ENCODE measurements at regions of chr5 and their contacts with region 1.

Region 1: DNA sequence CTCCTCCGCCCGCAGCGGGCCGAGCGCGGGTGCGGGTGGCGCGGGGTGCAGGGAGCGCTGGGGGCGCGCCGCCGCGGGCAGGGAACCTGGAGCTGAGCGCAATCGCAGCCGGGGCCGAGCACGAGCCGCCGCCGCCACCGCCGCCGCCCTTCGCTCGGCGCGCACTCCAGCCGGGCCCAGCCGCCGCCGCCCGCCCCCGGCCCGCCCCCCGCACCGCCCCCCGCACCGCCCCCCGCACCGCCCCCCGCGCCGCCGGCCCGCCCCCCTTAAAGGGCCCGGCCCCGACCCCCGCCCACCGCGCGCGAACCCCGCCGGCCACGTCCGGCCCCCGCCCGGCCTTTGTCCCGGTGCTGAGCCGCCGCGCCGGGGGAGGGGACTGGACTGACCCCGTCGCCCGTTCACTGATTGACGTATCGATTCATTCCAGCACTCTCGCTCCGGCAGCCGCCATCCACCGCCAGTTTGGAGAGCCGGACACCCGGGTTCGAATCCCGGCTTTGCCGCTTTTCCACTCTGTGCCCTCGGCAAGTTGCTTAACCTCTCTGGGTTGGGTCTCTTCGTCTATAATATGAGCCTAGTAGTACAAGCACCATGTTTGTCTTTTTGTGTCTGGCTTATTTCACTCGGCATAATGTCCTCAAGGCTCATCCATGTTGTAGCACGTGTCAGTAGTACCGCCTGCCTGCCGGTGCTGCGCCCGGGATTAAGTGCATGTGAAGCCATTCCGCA is at the start of gene SH3PXD2B:
- DNase-seq: no peak
- ATAC-seq: peak; percentile 54
- H3K4me3 ChIP-seq: peak within 1 kb of the TSS; percentile 55; the same call in 1 of the 2 replicates
- H3K27ac ChIP-seq: no peak within 1 kb of the TSS
- H3K4me1 ChIP-seq: no peaks in the 10 kb centered on the region
- H3K27me3 ChIP-seq: peaks cover 1 to 6% of the 10 kb centered on the region in 2 experiments; a peak in 2 of 4 replicates
- CTCF ChIP-seq: no peak
- EP300 ChIP-seq: no peak
- POLR2A ChIP-seq: no peak
- RAD21 ChIP-seq: no peak
- polyA plus RNA-seq, gene SH3PXD2B: 0.45 to 0.66 TPM

Region 2: GRCh38 chr5:172315587-172316493 is 138.7 kb before region 1 on chr5:
- CTCF ChIA-PET with region 1: no interaction called
- POLR2A ChIA-PET with region 1: no interaction called
- RAD21 ChIA-PET with region 1: no interaction called
- SMC1A ChIA-PET with region 1: no interaction called
- in situ Hi-C with region 1: no loop called
- intact Hi-C with region 1: loop called (anchors 5 kb)
- DNase-seq: no peak
- ATAC-seq: peak; percentile 85
- H3K4me3 ChIP-seq: no peak overlapping the region
- H3K27ac ChIP-seq: peak overlapping the region; percentile 84
- H3K4me1 ChIP-seq: peaks cover 52% of the 10 kb centered on the region
- H3K27me3 ChIP-seq: no peaks in the 10 kb centered on the region
- CTCF ChIP-seq: no peak
- EP300 ChIP-seq: no peak
- POLR2A ChIP-seq: no peak
- RAD21 ChIP-seq: peak; percentile 10; the same call in 1 of the 2 replicates

Region 3: DNA sequence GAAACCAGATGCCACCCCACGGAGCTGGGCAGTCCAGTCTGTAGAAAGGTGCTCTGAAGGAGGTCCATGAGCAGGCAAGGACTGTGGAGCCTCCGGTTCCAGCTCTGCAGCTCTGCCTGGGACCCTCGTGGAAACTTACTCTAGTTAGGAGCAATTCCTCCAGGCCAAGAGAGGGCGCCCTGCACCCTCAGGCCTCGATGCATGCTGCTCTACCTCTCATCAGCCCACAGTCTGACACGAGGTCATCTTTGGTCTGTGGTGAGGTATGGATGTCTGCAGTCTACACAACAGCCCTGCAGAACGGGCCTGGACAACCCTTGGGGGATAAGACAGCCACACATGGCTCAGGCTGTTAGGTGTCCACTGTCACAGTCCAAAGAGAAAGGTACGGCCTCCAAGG is 120.3 kb before region 1 on chr5:
- CTCF ChIA-PET with region 1: interaction called, 6 read pairs
- POLR2A ChIA-PET with region 1: no interaction called
- RAD21 ChIA-PET with region 1: no interaction called
- SMC1A ChIA-PET with region 1: interaction called, 3 read pairs
- in situ Hi-C with region 1: no loop called
- intact Hi-C with region 1: loop called (anchors 1 kb)
- DNase-seq: no peak
- ATAC-seq: peak; percentile 68
- H3K4me3 ChIP-seq: no peak overlapping the region
- H3K27ac ChIP-seq: no peak overlapping the region
- H3K4me1 ChIP-seq: no peaks in the 10 kb centered on the region
- H3K27me3 ChIP-seq: no peaks in the 10 kb centered on the region; a peak in 1 of 4 replicates
- CTCF ChIP-seq: peak; percentile 9 to 36 (median 20); a peak in 3 of 6 replicates
- EP300 ChIP-seq: no peak
- POLR2A ChIP-seq: no peak
- RAD21 ChIP-seq: peak; percentile 38; the same call in 1 of the 2 replicates

Region 4: DNA sequence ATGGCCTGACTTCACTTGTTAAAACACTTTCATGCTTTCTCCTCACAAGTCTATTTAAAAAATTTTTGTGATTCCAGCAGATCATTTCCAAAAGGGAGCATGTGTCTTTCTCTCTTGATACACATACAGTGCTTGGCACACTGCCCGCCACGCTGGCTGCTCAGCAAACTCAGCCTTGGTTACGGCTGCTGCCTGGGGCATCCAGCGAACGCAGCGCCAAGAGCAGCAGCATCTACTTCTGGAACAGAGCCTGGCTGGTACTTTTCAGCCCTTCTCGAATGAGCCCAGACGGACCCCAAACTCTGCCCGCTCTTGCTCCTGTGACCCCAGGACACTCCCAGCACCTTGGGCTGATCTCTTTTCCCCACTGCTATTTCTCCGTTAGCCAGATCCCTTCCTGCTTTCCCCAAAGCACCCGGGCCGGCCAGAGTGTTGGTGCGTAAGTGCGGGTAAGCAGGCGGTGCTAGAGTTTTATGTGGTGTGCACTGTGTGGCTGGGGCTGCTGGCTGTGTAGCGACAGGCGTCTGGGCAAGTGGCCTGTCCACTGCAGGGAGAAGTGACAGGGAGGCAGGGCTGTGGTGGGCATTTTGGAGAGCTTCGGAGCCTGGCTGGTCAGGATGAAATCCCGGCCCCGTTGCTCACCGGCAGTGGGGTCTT is 73.4 kb before region 1 on chr5:
- CTCF ChIA-PET with region 1: interaction called, 5 read pairs
- POLR2A ChIA-PET with region 1: no interaction called
- RAD21 ChIA-PET with region 1: no interaction called
- SMC1A ChIA-PET with region 1: no interaction called
- in situ Hi-C with region 1: no loop called
- intact Hi-C with region 1: loop called (anchors 5 kb)
- DNase-seq: no peak
- ATAC-seq: no peak
- H3K4me3 ChIP-seq: no peak overlapping the region
- H3K27ac ChIP-seq: no peak overlapping the region
- H3K4me1 ChIP-seq: peaks cover 6% of the 10 kb centered on the region
- H3K27me3 ChIP-seq: no peaks in the 10 kb centered on the region
- CTCF ChIP-seq: no peak
- EP300 ChIP-seq: no peak
- POLR2A ChIP-seq: no peak
- RAD21 ChIP-seq: no peak

Region 5: GRCh38 chr5:172697123-172698121 is 242.9 kb after region 1 on chr5:
- CTCF ChIA-PET with region 1: interaction called, 38 read pairs
- POLR2A ChIA-PET with region 1: no interaction called
- RAD21 ChIA-PET with region 1: interaction called, 18 read pairs
- SMC1A ChIA-PET with region 1: no interaction called
- in situ Hi-C with region 1: no loop called
- intact Hi-C with region 1: no loop called
- DNase-seq: peak; percentile 33
- ATAC-seq: peak; percentile 94
- H3K4me3 ChIP-seq: peak overlapping the region; percentile 75
- H3K27ac ChIP-seq: 0 out of 2 replicates have a peak overlapping the region, but pooled peaks have one; percentile 16
- H3K4me1 ChIP-seq: peaks cover 7% of the 10 kb centered on the region
- H3K27me3 ChIP-seq: no peaks in the 10 kb centered on the region; a peak in 2 of 4 replicates
- CTCF ChIP-seq: peak; percentile 89 to 98 (median 91)
- EP300 ChIP-seq: no peak
- POLR2A ChIP-seq: peak; percentile 65
- RAD21 ChIP-seq: peak; percentile 92